ENCODE measurements at regions of chr9 and their contacts with region 1.

Region 1: GRCh38 chr9:127611899-127612790 is at the start of gene STXBP1:
- DNase-seq: peak in 1 of 2 experiments; percentile 95
- H3K4me3 ChIP-seq: peak within 1 kb of the TSS; percentile 68
- H3K27ac ChIP-seq: no peak within 1 kb of the TSS
- H3K4me1 ChIP-seq: peaks cover 40% of the 10 kb centered on the region
- H3K27me3 ChIP-seq: no peaks in the 10 kb centered on the region
- CTCF ChIP-seq: no peak
- total RNA-seq, gene STXBP1: 35.1 and 44.0 TPM in 2 replicates

Region 2: GRCh38 chr9:127629468-127630081 is 17.4 kb after region 1 on chr9:
- CTCF ChIA-PET with region 1: no interaction called
- POLR2A ChIA-PET with region 1: interaction called, 16 read pairs
- intact Hi-C with region 1: no loop called
- DNase-seq: no peak
- H3K4me3 ChIP-seq: no peak overlapping the region
- H3K27ac ChIP-seq: no peak overlapping the region
- H3K4me1 ChIP-seq: no peaks in the 10 kb centered on the region
- H3K27me3 ChIP-seq: no peaks in the 10 kb centered on the region
- CTCF ChIP-seq: no peak

Region 3: GRCh38 chr9:127684576-127684975 is 72.4 kb after region 1 on chr9:
- CTCF ChIA-PET with region 1: interaction called, 3 read pairs
- POLR2A ChIA-PET with region 1: interaction called, 11 read pairs
- intact Hi-C with region 1: loop called (anchors 10 kb)
- DNase-seq: peak; percentile 67 to 69
- H3K4me3 ChIP-seq: no peak overlapping the region
- H3K27ac ChIP-seq: no peak overlapping the region
- H3K4me1 ChIP-seq: peaks cover 10% of the 10 kb centered on the region
- H3K27me3 ChIP-seq: no peaks in the 10 kb centered on the region
- CTCF ChIP-seq: no peak

Region 4: DNA sequence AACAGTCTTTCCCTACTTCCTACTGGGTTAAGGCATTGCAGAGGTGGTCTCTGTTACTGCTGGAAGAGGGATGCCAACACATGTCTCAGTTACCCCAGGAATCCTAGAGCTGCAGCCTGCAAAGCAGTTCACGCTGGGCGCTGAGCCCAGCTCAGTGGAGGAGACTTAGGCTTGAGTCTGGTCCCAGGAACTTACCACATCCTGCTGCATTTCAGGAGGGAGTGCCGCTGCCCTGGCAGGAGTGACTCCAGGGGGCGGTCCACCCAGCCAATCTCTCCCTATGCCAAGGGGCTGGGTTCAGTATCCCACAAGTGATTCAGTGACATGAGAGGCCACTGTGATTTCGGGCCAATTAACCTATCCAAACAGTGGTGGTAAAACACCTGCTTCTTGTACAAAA is 111.3 kb after region 1 on chr9:
- CTCF ChIA-PET with region 1: interaction called, 4 read pairs
- POLR2A ChIA-PET with region 1: no interaction called
- intact Hi-C with region 1: loop called (anchors 5 kb)
- DNase-seq: peak in 1 of 2 experiments; percentile 28
- H3K4me3 ChIP-seq: no peak overlapping the region
- H3K27ac ChIP-seq: no peak overlapping the region
- H3K4me1 ChIP-seq: peaks cover 16% of the 10 kb centered on the region
- H3K27me3 ChIP-seq: no peaks in the 10 kb centered on the region
- CTCF ChIP-seq: no peak

Region 5: DNA sequence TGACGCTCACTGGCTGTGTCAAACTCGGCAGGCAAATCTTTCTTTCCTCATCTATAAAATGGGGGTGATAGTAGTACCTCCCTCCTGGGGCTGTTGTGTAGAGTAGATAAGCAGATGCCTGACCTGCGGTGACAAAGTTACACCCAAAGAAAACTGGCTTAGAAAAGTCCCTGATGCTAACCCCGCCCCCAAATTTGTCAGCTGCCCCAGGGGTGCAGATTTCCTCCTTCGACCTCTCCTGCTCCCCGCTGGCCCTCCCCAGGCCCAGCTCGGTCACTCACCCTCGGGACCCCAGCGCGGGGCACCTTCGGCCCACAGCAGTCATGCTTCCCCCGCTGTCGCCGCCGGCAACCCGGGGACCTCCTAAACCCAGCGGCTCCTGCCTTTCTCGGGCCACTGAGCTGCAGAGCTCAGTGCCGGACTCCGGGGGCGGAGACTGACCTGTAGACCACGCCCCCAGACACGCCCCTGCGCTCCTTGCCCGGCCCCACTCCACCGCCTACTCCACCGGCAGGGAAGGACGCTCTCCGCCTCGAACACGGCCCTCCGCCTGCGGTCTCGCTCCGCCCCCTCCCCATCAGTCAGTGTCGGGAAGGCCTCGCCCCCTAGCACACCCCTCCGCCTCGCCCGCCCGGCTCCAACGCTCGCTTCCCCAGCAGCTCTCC is 158.9 kb after region 1 on chr9:
- CTCF ChIA-PET with region 1: no interaction called
- POLR2A ChIA-PET with region 1: interaction called, 28 read pairs
- intact Hi-C with region 1: no loop called
- DNase-seq: peak; percentile 94 to 100
- H3K4me3 ChIP-seq: peak overlapping the region; percentile 72
- H3K27ac ChIP-seq: no peak overlapping the region
- H3K4me1 ChIP-seq: peaks cover 7% of the 10 kb centered on the region
- H3K27me3 ChIP-seq: peaks cover 8% of the 10 kb centered on the region; the same call in 1 of the 2 replicates
- CTCF ChIP-seq: no peak